Mammary epithelial cell (primary cell): ENCODE measurements at regions of chr9 and their contacts with region 1.

Region 1: DNA sequence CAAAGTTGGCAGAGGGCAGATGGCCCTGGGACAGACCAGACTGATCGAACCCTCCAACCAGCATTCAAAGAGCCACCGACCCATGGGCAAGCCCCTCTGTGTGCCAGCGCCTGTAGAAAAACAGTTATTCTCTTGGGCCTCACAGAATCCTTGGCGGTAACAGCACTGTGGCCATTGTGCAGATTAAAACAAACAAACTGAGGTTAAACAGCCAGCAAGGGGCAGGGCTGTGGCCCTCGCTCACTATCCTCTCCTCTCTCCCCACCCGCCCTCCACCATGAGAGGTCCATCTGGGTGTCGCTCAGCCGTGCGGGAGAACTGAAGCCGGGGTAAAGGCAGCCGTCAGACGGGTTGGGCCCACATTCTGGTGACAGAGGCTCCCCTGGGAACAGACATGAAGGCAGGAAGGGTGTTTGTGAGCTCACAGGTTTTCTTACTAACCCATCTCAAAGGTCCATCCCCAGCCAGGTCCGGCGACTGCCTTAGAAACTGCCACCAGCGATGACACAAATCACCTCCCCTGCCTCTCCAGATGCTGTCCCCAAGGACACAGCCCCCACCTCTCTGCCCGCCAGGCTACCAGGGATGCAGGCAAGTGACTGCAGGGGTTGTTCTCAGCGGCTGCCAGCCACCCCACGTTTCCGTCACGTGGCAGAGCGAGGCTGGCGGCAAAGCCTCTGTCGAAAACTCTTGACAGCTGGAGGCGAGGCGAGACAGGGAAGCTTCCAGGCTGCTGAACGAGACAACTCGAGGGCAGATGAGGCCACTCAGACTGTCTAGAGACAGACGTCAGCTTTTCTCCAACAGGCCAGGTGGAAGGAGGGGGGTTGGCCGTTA is 75.8 kb upstream of the SARDH start:
- DNase-seq: no peak
- H3K4me3 ChIP-seq: no peak overlapping the region
- H3K27ac ChIP-seq: no peak overlapping the region
- H3K4me1 ChIP-seq: no peaks in the 10 kb centered on the region
- H3K27me3 ChIP-seq: no peaks in the 10 kb centered on the region
- CTCF ChIP-seq: no peak

Region 2: DNA sequence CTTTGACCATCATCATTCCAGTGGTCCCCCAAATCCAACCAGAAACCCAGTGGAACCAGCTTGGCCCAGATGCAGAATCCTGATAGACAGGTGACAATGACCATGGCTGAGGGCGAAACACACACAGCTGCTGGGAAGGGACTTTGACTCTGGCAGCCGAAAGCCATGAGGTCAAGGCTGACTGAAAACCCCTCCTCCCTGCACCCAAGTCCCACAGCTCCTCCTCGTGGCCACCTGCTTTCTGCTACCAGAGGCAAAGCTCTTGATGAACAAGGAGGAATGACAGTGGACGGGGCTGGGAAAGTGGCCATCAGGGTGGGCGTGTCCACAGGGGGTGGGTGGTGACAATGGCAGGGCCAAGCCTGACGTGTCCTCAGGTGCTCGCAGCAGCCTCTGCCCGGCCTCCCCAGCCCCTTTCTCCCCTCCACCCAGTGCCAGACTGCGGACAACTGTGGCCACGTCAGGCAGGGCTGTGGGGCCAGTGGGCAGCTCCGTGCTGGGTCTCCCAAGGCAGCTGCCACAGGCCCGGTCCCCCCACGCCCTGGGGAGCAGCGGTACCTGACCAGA is 45.0 kb before region 1 on chr9:
- CTCF ChIA-PET with region 1: no interaction called
- dilution Hi-C with region 1: no loop called
- in situ Hi-C with region 1: no loop called
- intact Hi-C with region 1: no loop called
- DNase-seq: no peak
- H3K4me3 ChIP-seq: no peak overlapping the region
- H3K27ac ChIP-seq: no peak overlapping the region
- H3K4me1 ChIP-seq: no peaks in the 10 kb centered on the region
- H3K27me3 ChIP-seq: no peaks in the 10 kb centered on the region
- CTCF ChIP-seq: no peak

Region 3: DNA sequence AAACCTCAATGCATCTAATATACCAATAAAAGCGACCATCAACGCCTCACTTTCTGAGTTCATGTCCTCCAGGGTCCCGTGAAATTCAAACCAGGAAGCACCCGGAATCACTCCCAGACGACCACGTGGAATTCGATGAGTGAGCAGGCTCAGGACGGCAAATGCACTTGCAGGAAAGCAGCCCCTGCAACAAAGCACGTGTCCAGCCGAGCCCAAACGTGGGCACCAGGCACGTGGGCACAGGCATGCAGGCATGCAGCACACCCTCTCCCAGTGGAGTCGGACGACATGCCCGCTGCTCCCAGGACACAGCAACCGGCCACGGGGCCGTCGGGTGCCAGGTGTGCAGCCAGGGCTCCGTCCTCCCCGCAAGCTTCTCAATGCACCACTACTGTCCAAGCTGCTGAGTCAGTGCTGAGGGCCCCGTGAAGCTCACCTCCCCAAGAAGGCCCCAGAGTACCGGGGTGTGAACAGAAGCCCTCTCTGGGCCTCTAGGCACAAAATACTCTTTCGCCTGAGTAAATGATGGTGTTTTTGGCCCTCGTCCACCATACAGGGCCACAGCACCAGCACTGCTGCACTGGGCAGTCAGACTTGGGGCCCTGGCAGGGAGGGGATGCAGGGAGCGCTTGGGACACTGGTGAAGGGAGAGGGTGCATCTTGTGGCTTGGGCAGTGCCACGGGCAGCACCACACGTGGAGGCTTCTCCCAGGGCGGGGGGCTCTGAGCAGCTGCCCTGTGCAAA is 90.6 kb after region 1 on chr9:
- CTCF ChIA-PET with region 1: no interaction called
- dilution Hi-C with region 1: loop called (anchors 5 kb)
- in situ Hi-C with region 1: no loop called
- intact Hi-C with region 1: no loop called
- DNase-seq: no peak
- H3K4me3 ChIP-seq: no peak overlapping the region
- H3K27ac ChIP-seq: no peak overlapping the region
- H3K4me1 ChIP-seq: peaks cover 7% of the 10 kb centered on the region
- H3K27me3 ChIP-seq: no peaks in the 10 kb centered on the region
- CTCF ChIP-seq: no peak